ENCODE measurements at regions of chr15 and their contacts with region 1.

Region 1: DNA sequence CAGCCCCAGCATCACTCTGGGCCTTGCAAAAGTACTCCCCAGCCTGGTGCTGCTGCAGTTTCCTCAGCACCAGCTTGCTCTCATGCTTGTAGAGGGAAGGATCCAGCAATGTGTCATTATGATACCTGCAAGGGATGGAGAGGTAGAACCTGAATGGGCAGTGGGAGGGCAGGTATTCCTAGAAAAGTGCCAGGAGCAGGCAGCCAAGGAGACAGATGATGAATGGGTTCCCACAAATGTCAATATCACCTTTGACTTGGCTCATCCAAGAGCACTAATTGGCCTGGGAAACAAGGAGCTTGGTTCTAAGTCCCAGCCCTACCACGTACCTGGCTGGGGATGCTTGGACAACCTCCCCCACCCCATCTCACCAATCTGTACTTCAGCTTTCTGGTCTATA is 9.4 kb downstream of the CILP start:
- DNase-seq: no peak
- ATAC-seq: no peak
- H3K4me3 Mint-ChIP-seq: no peak overlapping the region
- H3K27ac Mint-ChIP-seq: no peak overlapping the region
- H3K4me1 Mint-ChIP-seq: no peaks in the 10 kb centered on the region
- H3K27me3 Mint-ChIP-seq: peaks cover 2% of the 10 kb centered on the region

Region 2: DNA sequence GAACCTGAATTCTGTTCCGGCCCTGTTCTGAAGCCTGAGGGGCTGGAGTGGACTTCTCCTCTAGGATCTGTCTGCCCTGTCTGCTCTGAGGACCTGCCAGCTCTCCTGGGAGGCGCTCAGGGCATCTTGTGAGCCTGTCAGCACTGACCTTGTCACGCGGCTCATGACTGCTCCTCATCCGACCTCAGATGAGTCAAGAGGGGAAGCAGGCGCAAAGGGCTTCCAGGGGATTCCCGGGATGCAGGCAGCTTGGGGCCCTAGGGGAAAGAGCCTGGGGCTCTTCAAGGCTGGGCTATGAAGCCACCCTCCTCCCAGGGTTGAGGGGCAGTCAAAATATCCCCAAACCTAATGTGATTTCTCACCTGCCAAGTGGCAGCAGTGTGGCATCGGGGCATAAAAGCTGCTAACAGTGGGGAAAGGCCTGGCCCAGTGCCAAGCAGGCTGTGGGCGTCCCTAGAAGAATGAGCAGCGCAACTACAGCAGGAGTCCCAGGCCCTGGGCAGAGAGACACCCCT is 317.9 kb before region 1 on chr15:
- CTCF ChIA-PET with region 1: no interaction called
- POLR2A ChIA-PET with region 1: no interaction called
- intact Hi-C with region 1: no loop called
- DNase-seq: peak; percentile 89
- ATAC-seq: peak; percentile 76
- H3K4me3 Mint-ChIP-seq: peak overlapping the region; percentile 13
- H3K27ac Mint-ChIP-seq: peak overlapping the region; percentile 92
- H3K4me1 Mint-ChIP-seq: peaks cover 32% of the 10 kb centered on the region
- H3K27me3 Mint-ChIP-seq: no peaks in the 10 kb centered on the region

Region 3: DNA sequence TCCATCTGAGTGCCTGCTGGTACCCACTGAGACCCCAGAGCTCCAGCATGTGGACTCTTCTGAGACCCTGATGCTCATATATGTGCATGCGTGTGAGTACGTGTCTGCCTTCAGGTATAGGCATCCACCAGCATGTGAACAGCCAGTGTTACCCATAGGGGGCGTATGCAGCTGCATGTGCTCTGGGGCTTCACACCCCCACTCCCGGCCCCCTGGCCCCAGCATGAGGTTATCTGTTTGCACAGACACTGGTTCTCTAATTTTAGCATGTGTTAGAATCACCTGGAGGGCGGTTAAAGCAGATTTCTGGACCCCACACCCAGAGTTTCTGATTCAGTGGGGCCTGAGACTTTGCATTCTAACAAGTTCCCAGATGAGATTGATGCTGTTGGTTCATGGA is 10.2 kb after region 1 on chr15:
- CTCF ChIA-PET with region 1: interaction called, 11 read pairs
- POLR2A ChIA-PET with region 1: no interaction called
- intact Hi-C with region 1: no loop called
- DNase-seq: peak; percentile 78
- ATAC-seq: peak; percentile 85
- H3K4me3 Mint-ChIP-seq: no peak overlapping the region
- H3K27ac Mint-ChIP-seq: no peak overlapping the region
- H3K4me1 Mint-ChIP-seq: peaks cover 3% of the 10 kb centered on the region
- H3K27me3 Mint-ChIP-seq: no peaks in the 10 kb centered on the region

Measured in activated CD4-positive, alpha-beta T cell treated with anti-CD3 and anti-CD28 coated beads for 36 hours (primary cell).